ENCODE measurements at regions of chr13 and their contacts with region 1.

Region 1: DNA sequence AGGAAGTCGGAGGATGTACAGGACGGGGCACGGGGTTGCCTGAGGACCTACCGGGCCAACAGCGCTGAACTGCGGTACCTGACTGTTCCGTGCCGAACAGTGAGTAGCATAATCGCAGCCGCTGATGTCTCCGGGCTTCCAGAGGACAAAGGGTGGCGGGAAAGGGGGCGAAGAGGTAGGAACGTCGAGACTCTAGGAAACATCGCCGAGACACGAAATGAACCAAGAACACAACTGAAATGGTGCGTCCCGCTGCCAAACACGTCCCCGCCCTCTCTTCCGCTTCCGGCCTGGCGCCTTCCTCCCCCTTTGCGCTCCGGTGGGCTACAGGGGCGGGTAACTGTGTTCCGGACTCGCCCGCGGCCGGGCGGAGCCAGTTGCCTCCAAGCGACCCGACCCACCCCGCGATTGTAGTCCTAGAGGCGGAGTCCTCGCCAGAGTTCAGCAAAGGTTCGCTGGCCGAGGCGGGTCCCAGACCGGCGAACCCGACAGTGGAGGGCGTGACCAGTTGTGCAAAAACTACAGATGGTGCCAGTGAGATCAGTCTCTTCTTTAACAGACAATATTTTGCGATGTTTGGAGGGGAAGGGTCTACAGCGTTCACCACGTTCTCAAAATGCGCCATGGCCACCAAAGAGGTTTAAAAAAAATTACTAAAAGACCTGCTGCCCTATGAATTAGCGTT is at the start of gene MRPS31:
- DNase-seq: peak; percentile 77
- ATAC-seq: peak; percentile 99
- H3K4me3 ChIP-seq: peak within 1 kb of the TSS; percentile 80
- H3K27ac ChIP-seq: peak within 1 kb of the TSS; percentile 94
- H3K4me1 ChIP-seq: peaks cover 3% of the 10 kb centered on the region; the same call in 1 of the 2 replicates
- H3K27me3 ChIP-seq: no peaks in the 10 kb centered on the region
- CTCF ChIP-seq: 0 out of 6 replicates have a peak, but pooled peaks of 1 of the 3 experiments have one; percentile 1
- EP300 ChIP-seq: no peak
- POLR2A ChIP-seq: peak; percentile 94
- RAD21 ChIP-seq: no peak
- polyA plus RNA-seq, gene MRPS31: 50.6 to 60.9 TPM

Region 2: GRCh38 chr13:39777527-39778061 is 993.5 kb before region 1 on chr13:
- CTCF ChIA-PET with region 1: no interaction called
- POLR2A ChIA-PET with region 1: no interaction called
- RAD21 ChIA-PET with region 1: no interaction called
- SMC1A ChIA-PET with region 1: no interaction called
- in situ Hi-C with region 1: no loop called
- intact Hi-C with region 1: loop called (anchors 10 kb)
- DNase-seq: no peak
- ATAC-seq: peak; percentile 75
- H3K4me3 ChIP-seq: no peak overlapping the region
- H3K27ac ChIP-seq: no peak overlapping the region
- H3K4me1 ChIP-seq: no peaks in the 10 kb centered on the region
- H3K27me3 ChIP-seq: no peaks in the 10 kb centered on the region
- CTCF ChIP-seq: peak; percentile 14 to 20 (median 20); a peak in 2 of 6 replicates
- EP300 ChIP-seq: no peak
- POLR2A ChIP-seq: no peak
- RAD21 ChIP-seq: no peak